Upper lobe of right lung (tissue), 1 donor: ENCODE measurements at regions of chr10 and their contacts with region 1.

Region 1: DNA sequence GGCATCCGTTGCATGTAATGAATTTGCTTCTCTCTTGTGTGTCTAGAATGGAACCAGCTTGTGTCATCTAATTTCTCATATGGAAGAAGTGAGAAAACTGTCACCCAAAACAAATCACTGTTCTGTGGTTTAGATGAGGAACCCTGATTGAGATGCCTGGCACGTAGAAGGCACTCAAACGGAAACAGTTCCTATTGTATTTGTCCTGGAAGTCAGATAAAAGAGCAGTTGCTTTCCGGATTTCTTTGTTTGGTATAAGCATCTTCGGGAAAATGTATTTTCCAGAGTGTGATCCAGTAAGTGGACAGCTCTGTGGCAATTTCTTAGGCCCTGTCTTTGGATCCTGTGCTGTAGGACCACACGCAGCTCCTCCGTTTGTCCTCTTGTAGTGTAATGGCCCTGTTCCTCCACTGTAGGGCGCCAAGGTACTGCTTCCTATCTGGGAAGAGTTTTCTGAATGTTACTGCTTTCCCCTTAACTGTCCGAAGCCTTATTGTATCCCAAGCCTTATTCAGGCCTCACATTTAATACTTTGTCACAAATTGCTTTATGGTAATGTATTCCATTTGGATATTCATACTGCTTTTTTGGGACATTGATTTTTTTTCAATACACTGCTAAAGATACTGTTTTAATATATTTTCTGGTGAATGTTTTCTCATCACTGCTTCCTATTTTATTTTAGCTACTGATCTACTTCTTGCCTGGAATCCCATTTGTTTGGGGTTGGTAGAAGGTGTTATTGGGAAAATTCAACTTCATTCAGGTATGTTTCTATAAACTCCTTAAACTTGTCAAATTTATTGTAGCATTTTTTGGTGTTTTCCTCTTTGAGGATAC is 24.8 kb downstream of the INPP5F start:
- DNase-seq: no peak
- ATAC-seq: peak; percentile 98
- H3K4me3 ChIP-seq: no peak overlapping the region
- H3K27ac ChIP-seq: peak overlapping the region; percentile 12
- H3K4me1 ChIP-seq: no peaks in the 10 kb centered on the region
- H3K27me3 ChIP-seq: no peaks in the 10 kb centered on the region
- CTCF ChIP-seq: peak; percentile 95

Region 2: DNA sequence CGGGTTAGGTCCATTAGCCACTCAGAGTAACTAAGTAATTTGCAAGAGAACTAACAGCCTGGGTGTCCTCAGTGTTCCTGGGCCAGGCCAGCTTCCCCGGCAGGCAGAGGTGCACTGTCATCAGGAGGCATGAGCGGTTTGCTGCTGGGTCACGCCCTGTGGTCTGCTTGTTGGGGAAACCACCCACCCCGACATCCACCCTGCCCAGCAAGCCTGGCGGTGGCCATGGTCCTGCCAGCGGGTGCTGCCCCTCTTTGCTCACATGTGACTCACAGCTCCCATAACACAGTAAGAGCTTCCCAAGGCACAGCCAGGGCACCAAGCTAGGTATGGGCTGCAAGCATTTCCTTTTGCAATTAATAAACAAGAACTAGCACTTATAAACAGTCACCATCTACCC is 284.0 kb before region 1 on chr10:
- intact Hi-C with region 1: no loop called
- DNase-seq: no peak
- ATAC-seq: peak; percentile 13
- H3K4me3 ChIP-seq: no peak overlapping the region
- H3K27ac ChIP-seq: no peak overlapping the region
- H3K4me1 ChIP-seq: no peaks in the 10 kb centered on the region
- H3K27me3 ChIP-seq: no peaks in the 10 kb centered on the region
- CTCF ChIP-seq: no peak

Region 3: DNA sequence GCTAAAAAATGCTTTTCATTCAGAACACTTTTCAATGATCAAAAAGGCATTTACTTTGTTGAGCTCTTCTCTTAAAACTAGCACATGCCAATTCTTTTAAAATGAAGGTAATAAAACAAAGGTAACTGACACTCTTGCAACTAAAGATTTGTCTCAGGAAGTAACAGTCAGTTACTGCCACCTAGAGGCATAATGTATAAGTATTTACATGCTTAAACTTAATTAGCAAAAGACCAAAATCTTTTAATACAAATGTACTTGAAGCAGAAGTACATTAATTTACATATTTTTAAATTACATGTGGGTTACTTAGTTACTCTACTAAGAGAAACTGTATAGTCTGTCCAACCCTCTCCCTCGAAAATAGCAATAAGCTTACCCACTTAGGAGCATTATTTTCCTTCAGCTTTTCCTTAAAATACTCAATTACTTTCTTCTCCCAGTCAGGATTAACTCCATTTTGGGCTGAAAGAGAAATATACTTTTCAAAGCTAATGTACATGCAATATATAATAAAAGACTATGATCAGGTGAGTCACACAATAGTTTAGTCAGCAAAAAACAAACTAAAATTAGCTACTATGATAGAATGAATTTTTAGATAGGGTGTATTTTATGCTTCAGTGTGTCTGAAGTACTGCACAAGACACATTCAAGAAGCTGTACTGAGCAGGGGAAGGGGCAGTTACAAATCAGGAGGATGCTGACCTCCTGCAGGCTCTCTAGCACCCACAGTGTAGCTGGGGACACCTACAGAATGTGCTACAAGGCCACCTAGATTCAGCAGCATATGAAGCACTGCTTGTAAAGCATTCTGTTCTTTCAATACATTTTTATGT is 109.0 kb after region 1 on chr10:
- intact Hi-C with region 1: loop called (anchors 5 kb)
- DNase-seq: no peak
- ATAC-seq: peak; percentile 43
- H3K4me3 ChIP-seq: no peak overlapping the region
- H3K27ac ChIP-seq: no peak overlapping the region
- H3K4me1 ChIP-seq: no peaks in the 10 kb centered on the region
- H3K27me3 ChIP-seq: no peaks in the 10 kb centered on the region
- CTCF ChIP-seq: peak; percentile 65

Region 4: DNA sequence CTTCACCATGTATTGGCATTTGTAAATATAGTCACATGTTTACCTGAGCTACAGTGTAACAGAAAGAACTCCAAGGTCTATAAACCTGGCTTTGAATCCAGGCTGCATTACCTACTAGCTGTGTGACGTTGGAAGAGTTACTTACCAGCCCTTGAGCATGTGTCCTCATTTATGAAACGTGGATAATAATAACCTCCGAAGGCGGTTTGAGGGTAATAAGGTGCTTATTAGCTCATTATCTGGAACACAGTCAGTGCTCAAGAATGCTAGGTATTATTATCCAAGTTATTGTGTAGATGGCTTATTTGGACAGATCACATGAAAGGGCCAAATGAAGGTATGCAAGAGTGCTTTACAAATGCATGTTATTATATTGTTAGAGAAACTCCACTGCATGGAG is 206.8 kb after region 1 on chr10:
- intact Hi-C with region 1: no loop called
- DNase-seq: no peak
- ATAC-seq: no peak
- H3K4me3 ChIP-seq: no peak overlapping the region
- H3K27ac ChIP-seq: no peak overlapping the region
- H3K4me1 ChIP-seq: no peaks in the 10 kb centered on the region
- H3K27me3 ChIP-seq: no peaks in the 10 kb centered on the region
- CTCF ChIP-seq: no peak